Panc1 (cell line): ENCODE measurements at regions of chr1 and their contacts with region 1.

Region 1: DNA sequence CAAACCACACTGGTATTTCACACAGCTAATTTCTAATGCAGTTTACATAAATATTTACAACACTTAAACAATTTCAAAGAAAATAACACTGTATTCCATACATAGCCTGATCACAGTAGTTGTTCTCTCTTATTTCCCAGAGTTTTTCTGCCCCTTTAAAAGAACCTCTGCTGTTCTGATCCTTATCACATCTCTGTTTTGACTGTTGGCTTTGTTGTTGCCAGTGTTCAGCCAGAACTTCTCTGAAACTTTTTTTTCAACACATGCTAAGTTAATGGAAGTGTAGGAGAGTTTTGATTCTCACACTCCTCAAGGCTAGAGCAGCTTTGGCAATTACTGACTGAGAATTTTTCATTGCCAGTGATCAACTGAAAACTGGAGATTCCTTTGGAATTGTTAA is 11.1 kb downstream of the SELE start:
- DNase-seq: no peak
- ATAC-seq: no peak
- H3K4me3 ChIP-seq: no peak overlapping the region
- H3K27ac ChIP-seq: no peak overlapping the region
- H3K4me1 ChIP-seq: no peaks in the 10 kb centered on the region
- H3K27me3 ChIP-seq: no peaks in the 10 kb centered on the region
- CTCF ChIP-seq: no peak

Region 2: DNA sequence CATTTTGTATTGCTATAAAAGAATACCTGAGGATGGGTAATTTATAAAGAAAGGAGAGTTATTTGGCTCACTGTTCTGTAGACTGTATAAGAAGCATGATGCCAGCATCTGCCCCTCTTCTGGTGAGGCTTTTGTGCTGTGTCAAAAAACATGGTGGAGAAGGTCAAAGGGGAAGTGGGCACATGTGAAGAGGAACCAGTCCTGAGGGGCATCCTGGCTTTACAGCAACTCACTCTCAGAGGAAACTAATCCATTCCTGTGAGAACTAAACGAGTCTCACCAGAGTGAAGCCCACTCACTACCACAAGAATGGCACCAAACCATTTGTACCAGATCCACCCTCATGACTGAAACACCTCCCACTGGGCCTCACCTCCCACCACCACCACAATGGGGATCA is 74.1 kb before region 1 on chr1:
- CTCF ChIA-PET with region 1: no interaction called
- POLR2A ChIA-PET with region 1: interaction called, 14 read pairs
- in situ Hi-C with region 1: no loop called
- intact Hi-C with region 1: no loop called
- DNase-seq: no peak
- ATAC-seq: no peak
- H3K4me3 ChIP-seq: no peak overlapping the region
- H3K27ac ChIP-seq: no peak overlapping the region
- H3K4me1 ChIP-seq: no peaks in the 10 kb centered on the region
- H3K27me3 ChIP-seq: peaks cover 7% of the 10 kb centered on the region; the same call in 1 of the 2 replicates
- CTCF ChIP-seq: no peak

Region 3: GRCh38 chr1:169739980-169740379 is 17.2 kb after region 1 on chr1:
- CTCF ChIA-PET with region 1: interaction called, 10 read pairs
- POLR2A ChIA-PET with region 1: no interaction called
- in situ Hi-C with region 1: no loop called
- intact Hi-C with region 1: no loop called
- DNase-seq: no peak
- ATAC-seq: no peak
- H3K4me3 ChIP-seq: no peak overlapping the region
- H3K27ac ChIP-seq: no peak overlapping the region
- H3K4me1 ChIP-seq: no peaks in the 10 kb centered on the region
- H3K27me3 ChIP-seq: 0 out of 2 replicates have a peak, but pooled peaks cover 2% of the 10 kb centered on the region
- CTCF ChIP-seq: no peak

Region 4: GRCh38 chr1:170410401-170411166 is 687.8 kb after region 1 on chr1:
- CTCF ChIA-PET with region 1: no interaction called
- POLR2A ChIA-PET with region 1: no interaction called
- in situ Hi-C with region 1: no loop called
- intact Hi-C with region 1: no loop called
- DNase-seq: no peak
- ATAC-seq: no peak
- H3K4me3 ChIP-seq: no peak overlapping the region
- H3K27ac ChIP-seq: no peak overlapping the region
- H3K4me1 ChIP-seq: no peaks in the 10 kb centered on the region
- H3K27me3 ChIP-seq: no peaks in the 10 kb centered on the region
- CTCF ChIP-seq: no peak